B cell (primary cell): ENCODE measurements at regions of chr6 and their contacts with region 1.

Region 1: GRCh38 chr6:34392497-34393190 is at the start of gene NUDT3:
- DNase-seq: peak; percentile 99
- ATAC-seq: peak; percentile 87
- H3K4me3 ChIP-seq: peak within 1 kb of the TSS; percentile 71 to 97 (median 87)
- H3K4me3 Mint-ChIP-seq: no peak within 1 kb of the TSS
- H3K27ac ChIP-seq: peak within 1 kb of the TSS; percentile 71 to 88
- H3K27ac Mint-ChIP-seq: peak within 1 kb of the TSS; percentile 87
- H3K4me1 ChIP-seq: peaks cover 16 to 31% of the 10 kb centered on the region in 2 donors
- H3K4me1 Mint-ChIP-seq: peaks cover 25% of the 10 kb centered on the region
- H3K27me3 ChIP-seq: no peaks in the 10 kb centered on the region
- H3K27me3 Mint-ChIP-seq: no peaks in the 10 kb centered on the region
- CTCF ChIP-seq: peak; percentile 79
- total RNA-seq, gene NUDT3: 37.4 and 40.1 TPM in 2 replicates

Region 2: GRCh38 chr6:34295721-34296120 is 96.9 kb before region 1 on chr6:
- CTCF ChIA-PET with region 1: interaction called, 5 read pairs
- POLR2A ChIA-PET with region 1: no interaction called
- intact Hi-C with region 1: loop called (anchors 2 kb)
- DNase-seq: peak; percentile 74
- ATAC-seq: peak; percentile 91
- H3K4me3 ChIP-seq: peak overlapping the region in 3 of 5 experiments; percentile 16 to 23 (median 21)
- H3K4me3 Mint-ChIP-seq: peak overlapping the region; percentile 76
- H3K27ac ChIP-seq: peak overlapping the region; percentile 75 to 82
- H3K27ac Mint-ChIP-seq: peak overlapping the region; percentile 96
- H3K4me1 ChIP-seq: peaks cover 51 to 62% of the 10 kb centered on the region in 2 donors
- H3K4me1 Mint-ChIP-seq: peaks cover 66% of the 10 kb centered on the region
- H3K27me3 ChIP-seq: no peaks in the 10 kb centered on the region
- H3K27me3 Mint-ChIP-seq: no peaks in the 10 kb centered on the region
- CTCF ChIP-seq: no peak

Region 3: DNA sequence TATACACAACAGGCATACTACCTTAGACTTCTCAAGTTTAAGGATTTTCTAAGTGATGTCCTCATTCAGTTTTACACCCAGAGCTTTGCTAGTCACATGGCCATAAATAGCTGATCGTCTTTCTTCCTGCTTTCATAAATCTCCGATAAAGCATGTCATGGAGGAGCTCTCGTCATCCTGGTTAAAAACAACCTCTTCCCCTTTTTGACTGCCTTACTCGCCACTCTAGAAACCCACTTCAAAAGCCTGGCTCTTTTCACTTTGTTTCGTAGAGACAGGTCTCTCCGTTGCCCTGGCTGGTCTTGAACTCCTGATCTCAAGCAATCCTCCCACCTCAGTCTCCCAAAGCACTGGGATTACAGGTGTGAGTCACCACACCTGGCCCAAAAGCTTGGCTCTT is 76.9 kb before region 1 on chr6:
- CTCF ChIA-PET with region 1: no interaction called
- POLR2A ChIA-PET with region 1: interaction called, 3 read pairs
- intact Hi-C with region 1: loop called (anchors 2 kb)
- DNase-seq: peak; percentile 82
- ATAC-seq: peak; percentile 86
- H3K4me3 ChIP-seq: peak overlapping the region in 4 of 5 experiments; percentile 6 to 45 (median 22)
- H3K4me3 Mint-ChIP-seq: peak overlapping the region; percentile 75
- H3K27ac ChIP-seq: peak overlapping the region; percentile 82 to 89
- H3K27ac Mint-ChIP-seq: peak overlapping the region; percentile 94
- H3K4me1 ChIP-seq: peaks cover 50 to 51% of the 10 kb centered on the region in 2 donors
- H3K4me1 Mint-ChIP-seq: peaks cover 65% of the 10 kb centered on the region
- H3K27me3 ChIP-seq: no peaks in the 10 kb centered on the region
- H3K27me3 Mint-ChIP-seq: no peaks in the 10 kb centered on the region
- CTCF ChIP-seq: no peak

Region 4: GRCh38 chr6:34332251-34333198 is 60.1 kb before region 1 on chr6:
- CTCF ChIA-PET with region 1: interaction called, 3 read pairs
- POLR2A ChIA-PET with region 1: interaction called, 4 read pairs
- intact Hi-C with region 1: loop called (anchors 5 kb)
- DNase-seq: peak; percentile 47
- ATAC-seq: peak; percentile 38
- H3K4me3 ChIP-seq: peak overlapping the region in 4 of 5 experiments; percentile 2 to 50 (median 21)
- H3K4me3 Mint-ChIP-seq: peak overlapping the region; percentile 63
- H3K27ac ChIP-seq: peak overlapping the region; percentile 36 to 65
- H3K27ac Mint-ChIP-seq: peak overlapping the region; percentile 68
- H3K4me1 ChIP-seq: peaks cover 28 to 33% of the 10 kb centered on the region in 2 donors
- H3K4me1 Mint-ChIP-seq: peaks cover 46% of the 10 kb centered on the region
- H3K27me3 ChIP-seq: no peaks in the 10 kb centered on the region
- H3K27me3 Mint-ChIP-seq: no peaks in the 10 kb centered on the region
- CTCF ChIP-seq: no peak

Region 5: DNA sequence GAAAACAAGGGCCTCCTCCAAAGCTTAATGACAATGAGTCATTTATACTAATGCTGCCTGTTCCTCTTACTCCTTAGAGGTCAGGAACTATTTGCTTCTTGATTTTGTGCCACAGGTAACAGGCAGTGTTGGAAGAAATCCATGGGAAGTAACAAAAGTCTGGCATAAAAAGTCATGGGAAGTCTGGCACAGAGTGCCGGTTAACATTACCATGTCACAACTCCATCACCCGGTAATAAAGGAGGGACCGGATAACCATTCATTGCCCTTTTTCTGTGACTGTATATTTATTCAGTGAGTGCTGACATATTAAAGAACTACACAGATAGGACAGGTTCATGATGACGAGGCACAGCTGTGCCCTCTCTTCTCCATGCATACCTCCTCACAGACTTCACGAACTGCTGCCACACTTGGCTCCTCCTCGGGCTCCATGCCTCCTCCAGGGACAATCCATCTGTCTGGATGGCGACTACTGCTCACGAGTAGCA is 51.1 kb before region 1 on chr6:
- CTCF ChIA-PET with region 1: no interaction called
- POLR2A ChIA-PET with region 1: no interaction called
- intact Hi-C with region 1: loop called (anchors 5 kb)
- DNase-seq: no peak
- ATAC-seq: no peak
- H3K4me3 ChIP-seq: no peak overlapping the region
- H3K4me3 Mint-ChIP-seq: no peak overlapping the region
- H3K27ac ChIP-seq: no peak overlapping the region
- H3K27ac Mint-ChIP-seq: peak overlapping the region; percentile 13
- H3K4me1 ChIP-seq: peaks cover 26 to 29% of the 10 kb centered on the region in 2 donors
- H3K4me1 Mint-ChIP-seq: peaks cover 64% of the 10 kb centered on the region
- H3K27me3 ChIP-seq: no peaks in the 10 kb centered on the region
- H3K27me3 Mint-ChIP-seq: no peaks in the 10 kb centered on the region
- CTCF ChIP-seq: no peak

Region 6: DNA sequence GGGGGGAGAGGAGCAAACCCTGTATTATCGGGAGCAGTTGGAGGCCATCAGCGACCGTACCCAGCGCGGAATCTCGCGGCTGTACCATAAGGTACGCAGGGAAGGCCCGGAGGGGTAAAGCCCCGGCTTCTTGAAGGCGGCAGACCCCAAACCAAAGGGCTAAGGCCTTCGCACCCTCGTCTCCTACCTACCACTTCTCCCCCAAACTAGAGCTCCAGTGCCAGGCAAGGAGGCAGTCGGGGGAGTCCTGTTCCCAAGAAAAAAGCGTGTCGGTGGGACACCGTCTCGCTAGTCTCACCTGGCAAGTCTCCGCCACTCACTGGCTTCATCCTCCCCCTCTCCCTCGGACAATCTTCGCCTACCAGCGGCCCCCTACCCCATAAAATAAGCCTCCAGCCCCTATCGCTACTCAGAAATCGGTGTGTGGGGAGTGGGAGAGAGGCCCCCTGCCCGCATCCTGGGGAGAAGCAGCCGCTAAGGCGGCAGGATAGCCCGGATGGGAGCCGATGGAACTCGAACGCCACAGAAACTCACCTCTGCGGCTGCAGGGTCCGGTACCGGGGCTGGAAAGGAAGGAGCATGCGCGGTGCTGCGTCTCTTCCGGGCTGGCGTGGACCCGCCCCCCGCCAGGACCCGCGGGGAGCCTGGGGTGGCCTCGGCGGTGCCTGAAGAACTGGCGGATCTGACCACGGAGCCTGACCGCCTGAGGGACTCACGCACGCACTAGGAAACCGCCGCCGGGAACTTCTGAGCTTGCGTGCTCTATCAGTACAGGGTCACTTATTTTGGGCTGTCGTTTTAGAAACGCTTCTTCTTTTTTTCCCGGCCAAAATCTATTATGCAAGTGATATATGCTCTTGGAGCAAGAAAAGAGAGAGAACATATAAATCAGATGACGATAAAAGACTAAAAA is 33.1 kb after region 1 on chr6 and contains the start of gene RPS10:
- CTCF ChIA-PET with region 1: interaction called, 4 read pairs
- POLR2A ChIA-PET with region 1: no interaction called
- intact Hi-C with region 1: loop called (anchors 2 kb)
- DNase-seq: peak; percentile 94
- ATAC-seq: peak; percentile 99
- H3K4me3 ChIP-seq: peak within 1 kb of the TSS; percentile 80 to 94 (median 90)
- H3K4me3 Mint-ChIP-seq: peak within 1 kb of the TSS; percentile 86
- H3K27ac ChIP-seq: peak within 1 kb of the TSS; percentile 77 to 82
- H3K27ac Mint-ChIP-seq: peak within 1 kb of the TSS; percentile 95
- H3K4me1 ChIP-seq: peaks cover 10 to 23% of the 10 kb centered on the region in 2 donors
- H3K4me1 Mint-ChIP-seq: peaks cover 21% of the 10 kb centered on the region
- H3K27me3 ChIP-seq: no peaks in the 10 kb centered on the region
- H3K27me3 Mint-ChIP-seq: no peaks in the 10 kb centered on the region
- CTCF ChIP-seq: no peak
- total RNA-seq, gene RPS10: 2,661 and 2,707 TPM in 2 replicates

Region 7: DNA sequence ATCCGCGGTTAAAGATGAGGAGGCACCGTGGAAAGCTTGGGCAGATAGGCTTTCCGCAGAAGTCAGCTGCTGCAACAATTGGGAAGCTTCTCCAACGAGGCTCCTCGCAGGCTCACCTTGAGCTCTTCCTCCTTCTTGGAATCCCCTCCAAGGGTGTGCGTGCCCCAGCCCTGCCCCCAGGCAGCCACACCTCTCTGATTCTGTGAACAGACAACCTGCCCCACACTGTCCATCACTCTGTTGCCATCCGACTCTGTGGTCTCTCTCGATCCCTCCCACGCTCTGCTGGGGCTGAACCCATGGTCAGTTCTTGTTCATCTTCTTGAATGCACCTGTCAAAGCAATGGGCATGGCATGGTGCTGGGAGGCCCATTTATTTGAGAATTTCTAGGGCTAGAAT is 104.8 kb after region 1 on chr6:
- CTCF ChIA-PET with region 1: no interaction called
- POLR2A ChIA-PET with region 1: no interaction called
- intact Hi-C with region 1: no loop called
- DNase-seq: no peak
- ATAC-seq: no peak
- H3K4me3 ChIP-seq: no peak overlapping the region
- H3K4me3 Mint-ChIP-seq: no peak overlapping the region
- H3K27ac ChIP-seq: no peak overlapping the region
- H3K27ac Mint-ChIP-seq: no peak overlapping the region
- H3K4me1 ChIP-seq: no peaks in the 10 kb centered on the region
- H3K4me1 Mint-ChIP-seq: no peaks in the 10 kb centered on the region
- H3K27me3 ChIP-seq: peaks cover 0 to 8% (median 0%) of the 10 kb centered on the region in 4 experiments
- H3K27me3 Mint-ChIP-seq: no peaks in the 10 kb centered on the region
- CTCF ChIP-seq: no peak

Region 8: DNA sequence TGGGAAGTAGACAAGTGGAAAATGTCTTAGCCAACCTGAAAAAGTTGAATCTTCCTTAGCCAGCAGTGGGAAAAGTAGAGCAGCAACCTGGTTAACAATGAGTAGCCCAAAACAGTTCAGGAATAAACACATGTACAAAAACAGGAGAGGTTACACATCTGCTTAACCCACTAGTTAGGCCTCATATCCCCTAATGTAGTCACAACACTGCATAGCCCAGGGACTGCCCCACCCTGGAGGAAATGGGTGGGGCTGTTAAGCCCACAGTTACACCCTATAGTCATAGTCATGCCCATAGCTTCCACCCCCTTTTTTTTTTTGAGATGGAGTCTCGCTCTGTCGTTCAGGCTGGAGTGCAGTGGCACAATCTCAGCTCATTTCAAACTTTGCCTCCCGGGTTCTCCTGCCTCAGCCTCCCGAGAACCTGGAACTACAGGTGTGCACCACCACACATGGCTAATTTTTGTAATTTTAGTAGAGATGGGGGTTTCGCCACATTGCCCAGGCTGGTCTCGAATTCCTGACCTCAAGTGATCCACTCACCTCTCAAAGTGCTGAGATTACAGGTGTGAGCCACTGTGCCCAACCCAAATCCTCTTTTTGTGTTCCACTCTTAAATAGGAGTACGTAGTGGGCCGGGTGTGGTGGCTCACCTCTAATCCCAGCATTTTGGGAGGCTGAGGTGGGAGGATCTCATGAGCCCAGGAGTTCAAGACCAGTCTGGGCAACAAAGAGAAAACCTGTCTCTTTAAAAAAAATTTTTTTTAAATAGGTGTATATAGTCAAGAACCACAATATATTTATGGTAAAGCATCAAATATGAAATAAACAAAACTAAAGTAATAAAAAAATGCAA is 279.4 kb after region 1 on chr6:
- CTCF ChIA-PET with region 1: no interaction called
- POLR2A ChIA-PET with region 1: no interaction called
- intact Hi-C with region 1: loop called (anchors 10 kb)
- DNase-seq: peak; percentile 90
- ATAC-seq: peak; percentile 94
- H3K4me3 ChIP-seq: peak overlapping the region; percentile 9 to 57 (median 39)
- H3K4me3 Mint-ChIP-seq: peak overlapping the region; percentile 88
- H3K27ac ChIP-seq: peak overlapping the region; percentile 96 to 98
- H3K27ac Mint-ChIP-seq: peak overlapping the region; percentile 98
- H3K4me1 ChIP-seq: peaks cover 60 to 69% of the 10 kb centered on the region in 2 donors
- H3K4me1 Mint-ChIP-seq: peaks cover 71% of the 10 kb centered on the region
- H3K27me3 ChIP-seq: no peaks in the 10 kb centered on the region
- H3K27me3 Mint-ChIP-seq: no peaks in the 10 kb centered on the region
- CTCF ChIP-seq: no peak